CD8-positive, alpha-beta T cell (primary cell): ENCODE measurements at regions of chr12 and their contacts with region 1.

Region 1: DNA sequence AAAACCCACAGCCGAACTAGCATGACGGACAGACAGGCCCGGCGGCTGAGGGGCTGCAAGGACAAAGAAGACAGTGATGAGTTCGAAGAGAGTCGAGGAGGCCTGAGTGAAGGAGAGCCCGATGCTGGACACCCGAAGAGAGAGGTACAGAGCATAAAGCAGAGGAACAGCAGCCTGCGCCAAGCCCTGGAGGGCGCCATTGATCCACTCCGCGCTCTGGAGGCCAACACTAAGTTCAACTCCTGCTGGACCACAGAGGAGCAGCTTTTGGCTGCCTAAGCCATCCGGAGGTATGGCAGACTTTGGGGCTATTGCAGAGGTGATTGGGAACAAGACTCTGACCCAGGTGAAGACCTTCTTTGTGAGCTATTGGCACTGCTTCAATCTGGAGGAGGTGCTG is 7.8 kb upstream of the PLXNC1 start:
- DNase-seq: peak in 7 of 9 experiments; percentile 19 to 68 (median 51)
- ATAC-seq: peak; percentile 49
- H3K4me3 ChIP-seq: no peak overlapping the region
- H3K4me3 Mint-ChIP-seq: no peak overlapping the region
- H3K27ac ChIP-seq: no peak overlapping the region
- H3K27ac Mint-ChIP-seq: no peak overlapping the region
- H3K4me1 ChIP-seq: no peaks in the 10 kb centered on the region
- H3K4me1 Mint-ChIP-seq: no peaks in the 10 kb centered on the region
- H3K27me3 ChIP-seq: no peaks in the 10 kb centered on the region
- H3K27me3 Mint-ChIP-seq: no peaks in the 10 kb centered on the region
- CTCF ChIP-seq: peak; percentile 48

Region 2: GRCh38 chr12:94230357-94230905 is 89.9 kb after region 1 on chr12:
- CTCF ChIA-PET with region 1: no interaction called
- POLR2A ChIA-PET with region 1: no interaction called
- intact Hi-C with region 1: no loop called
- DNase-seq: peak in 1 of 9 experiments; percentile 27
- ATAC-seq: no peak
- H3K4me3 ChIP-seq: no peak overlapping the region
- H3K4me3 Mint-ChIP-seq: peak overlapping the region; percentile 43
- H3K27ac ChIP-seq: peak overlapping the region in 1 of 2 experiments; percentile 28
- H3K27ac Mint-ChIP-seq: peak overlapping the region; percentile 66
- H3K4me1 ChIP-seq: peaks cover 15% of the 10 kb centered on the region
- H3K4me1 Mint-ChIP-seq: peaks cover 15% of the 10 kb centered on the region
- H3K27me3 ChIP-seq: no peaks in the 10 kb centered on the region
- H3K27me3 Mint-ChIP-seq: no peaks in the 10 kb centered on the region
- CTCF ChIP-seq: no peak

Region 3: GRCh38 chr12:94762259-94762942 is 621.8 kb after region 1 on chr12:
- CTCF ChIA-PET with region 1: no interaction called
- POLR2A ChIA-PET with region 1: no interaction called
- intact Hi-C with region 1: loop called (anchors 2 to 5 kb)
- DNase-seq: no peak
- ATAC-seq: no peak
- H3K4me3 ChIP-seq: no peak overlapping the region
- H3K4me3 Mint-ChIP-seq: no peak overlapping the region
- H3K27ac ChIP-seq: no peak overlapping the region
- H3K27ac Mint-ChIP-seq: no peak overlapping the region
- H3K4me1 ChIP-seq: no peaks in the 10 kb centered on the region
- H3K4me1 Mint-ChIP-seq: peaks cover 2% of the 10 kb centered on the region
- H3K27me3 ChIP-seq: peaks cover 0 to 2% of the 10 kb centered on the region in 2 experiments
- H3K27me3 Mint-ChIP-seq: peaks cover 6% of the 10 kb centered on the region
- CTCF ChIP-seq: no peak